ENCODE measurements at regions of chr1 and their contacts with region 1.

Region 1: DNA sequence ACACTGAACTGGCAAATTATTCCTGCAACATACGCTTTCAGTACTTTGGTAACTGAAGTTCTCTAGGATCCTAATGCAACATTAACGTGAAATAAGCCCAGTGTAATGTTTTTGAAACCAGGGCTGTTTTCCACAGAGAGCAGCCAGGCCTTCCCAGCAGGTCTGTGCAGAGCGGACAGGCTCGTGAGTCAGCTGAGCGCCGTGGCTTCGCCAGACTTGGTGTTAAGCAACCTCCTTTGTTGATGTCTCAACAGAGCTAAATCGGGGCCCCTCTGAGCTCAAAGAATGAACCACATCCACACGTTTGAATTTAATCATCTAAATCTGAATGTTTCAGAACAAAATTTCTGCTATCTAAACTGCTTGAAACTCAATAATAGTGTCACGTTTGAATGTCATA is 181.8 kb upstream of the FMN2 start:
- DNase-seq: no peak
- ATAC-seq: no peak
- H3K4me3 Mint-ChIP-seq: no peak overlapping the region
- H3K27ac Mint-ChIP-seq: no peak overlapping the region
- H3K4me1 Mint-ChIP-seq: peaks cover 35% of the 10 kb centered on the region
- H3K27me3 Mint-ChIP-seq: no peaks in the 10 kb centered on the region
- CTCF ChIP-seq: no peak

Region 2: DNA sequence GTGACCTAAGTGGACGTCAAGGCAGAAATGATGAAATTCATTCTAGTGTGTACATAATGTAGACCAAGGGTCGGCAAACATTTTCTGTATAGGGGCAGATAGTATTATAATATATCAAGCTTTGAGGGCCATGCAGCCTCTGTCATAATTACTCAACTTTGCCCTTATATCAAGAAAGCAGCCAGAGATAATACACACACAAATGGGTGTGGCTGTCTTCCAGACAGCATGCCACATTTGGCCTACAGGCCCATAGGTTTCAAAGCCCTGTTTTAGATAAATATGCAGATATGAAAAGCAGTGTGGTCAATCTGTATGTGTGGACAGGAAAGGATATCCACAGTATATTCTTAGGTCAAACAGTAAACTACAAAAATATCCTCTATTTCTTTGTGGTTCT is 138.3 kb before region 1 on chr1:
- CTCF ChIA-PET with region 1: no interaction called
- POLR2A ChIA-PET with region 1: no interaction called
- DNase-seq: no peak
- ATAC-seq: no peak
- H3K4me3 Mint-ChIP-seq: no peak overlapping the region
- H3K27ac Mint-ChIP-seq: no peak overlapping the region
- H3K4me1 Mint-ChIP-seq: peaks cover 17% of the 10 kb centered on the region
- H3K27me3 Mint-ChIP-seq: no peaks in the 10 kb centered on the region
- CTCF ChIP-seq: no peak

Region 3: GRCh38 chr1:239884796-239885195 is 25.1 kb before region 1 on chr1:
- CTCF ChIA-PET with region 1: no interaction called
- POLR2A ChIA-PET with region 1: no interaction called
- DNase-seq: no peak
- ATAC-seq: no peak
- H3K4me3 Mint-ChIP-seq: no peak overlapping the region
- H3K27ac Mint-ChIP-seq: no peak overlapping the region
- H3K4me1 Mint-ChIP-seq: peaks cover 22% of the 10 kb centered on the region
- H3K27me3 Mint-ChIP-seq: no peaks in the 10 kb centered on the region
- CTCF ChIP-seq: no peak

Region 4: DNA sequence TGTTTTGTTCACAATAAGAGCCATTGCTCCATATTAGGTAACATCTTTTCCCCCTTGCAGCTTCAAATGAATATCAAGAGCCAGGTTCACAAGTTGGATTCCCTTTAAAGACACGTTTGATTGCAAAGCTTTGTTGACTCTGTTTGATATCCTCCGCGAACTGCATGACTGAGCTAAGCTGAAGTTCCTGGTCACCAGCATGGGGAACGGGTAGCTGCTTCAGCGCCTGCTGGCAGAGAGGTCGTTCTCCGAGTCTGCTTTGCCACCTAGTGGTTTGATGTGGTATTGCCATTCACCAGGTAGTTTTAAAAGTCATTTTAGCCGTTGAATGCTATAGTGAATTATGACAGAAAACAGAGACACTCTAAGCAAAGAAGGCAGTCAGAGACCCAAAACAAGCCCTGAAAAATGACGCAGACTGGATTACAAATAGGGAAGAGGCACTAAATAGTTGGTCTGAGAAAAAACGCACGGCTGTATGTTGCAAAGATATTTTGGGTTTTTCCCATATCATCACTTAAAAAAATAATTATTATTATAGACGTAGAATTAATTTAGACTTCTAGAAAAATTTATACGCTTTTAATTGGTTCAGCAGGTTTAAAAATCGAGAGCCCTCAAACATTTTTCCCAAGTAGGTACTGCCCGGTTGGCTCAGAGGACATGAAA is 11.7 kb before region 1 on chr1:
- CTCF ChIA-PET with region 1: interaction called, 15 read pairs
- POLR2A ChIA-PET with region 1: no interaction called
- DNase-seq: peak; percentile 80
- ATAC-seq: peak; percentile 97
- H3K4me3 Mint-ChIP-seq: peak overlapping the region; percentile 46
- H3K27ac Mint-ChIP-seq: no peak overlapping the region
- H3K4me1 Mint-ChIP-seq: peaks cover 14% of the 10 kb centered on the region
- H3K27me3 Mint-ChIP-seq: no peaks in the 10 kb centered on the region
- CTCF ChIP-seq: peak; percentile 91